HCT116 (cell line): ENCODE measurements at regions of chr4 and their contacts with region 1.

Region 1: GRCh38 chr4:69896530-69897116 is 34.2 kb upstream of the CSN1S1 start:
- DNase-seq: peak; percentile 7
- ATAC-seq: peak; percentile 36; the same call in 1 of the 2 replicates
- H3K4me3 ChIP-seq: no peak overlapping the region
- H3K27ac ChIP-seq: no peak overlapping the region
- H3K4me1 ChIP-seq: no peaks in the 10 kb centered on the region
- H3K27me3 ChIP-seq: no peaks in the 10 kb centered on the region
- CTCF ChIP-seq: peak; percentile 47 to 54 (median 51); a peak in 5 of 6 replicates
- POLR2A ChIP-seq: no peak
- RAD21 ChIP-seq: peak; percentile 61

Region 2: DNA sequence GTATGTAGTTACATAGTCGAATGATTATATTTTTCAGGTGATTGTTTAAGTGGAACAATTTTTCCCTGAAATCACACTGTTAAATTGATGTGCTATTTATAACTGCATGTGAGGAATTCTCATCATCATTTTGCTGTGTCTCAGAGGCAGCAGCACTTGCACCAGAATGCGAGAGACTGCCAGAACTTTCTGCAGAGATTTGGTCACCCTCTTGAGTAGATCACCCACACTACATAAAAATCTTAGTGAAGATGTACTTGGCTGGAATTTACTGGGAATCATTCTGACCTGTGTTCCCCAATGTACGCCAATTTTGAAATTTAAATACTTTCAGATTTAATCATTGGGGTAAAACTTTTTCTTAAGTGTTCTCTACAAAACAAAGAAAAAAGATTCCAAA is 406.4 kb before region 1 on chr4:
- CTCF ChIA-PET with region 1: no interaction called
- POLR2A ChIA-PET with region 1: no interaction called
- RAD21 ChIA-PET with region 1: no interaction called
- intact Hi-C with region 1: no loop called
- DNase-seq: no peak
- ATAC-seq: no peak
- H3K4me3 ChIP-seq: no peak overlapping the region
- H3K27ac ChIP-seq: no peak overlapping the region
- H3K4me1 ChIP-seq: no peaks in the 10 kb centered on the region
- H3K27me3 ChIP-seq: no peaks in the 10 kb centered on the region
- CTCF ChIP-seq: no peak
- POLR2A ChIP-seq: no peak
- RAD21 ChIP-seq: no peak

Region 3: DNA sequence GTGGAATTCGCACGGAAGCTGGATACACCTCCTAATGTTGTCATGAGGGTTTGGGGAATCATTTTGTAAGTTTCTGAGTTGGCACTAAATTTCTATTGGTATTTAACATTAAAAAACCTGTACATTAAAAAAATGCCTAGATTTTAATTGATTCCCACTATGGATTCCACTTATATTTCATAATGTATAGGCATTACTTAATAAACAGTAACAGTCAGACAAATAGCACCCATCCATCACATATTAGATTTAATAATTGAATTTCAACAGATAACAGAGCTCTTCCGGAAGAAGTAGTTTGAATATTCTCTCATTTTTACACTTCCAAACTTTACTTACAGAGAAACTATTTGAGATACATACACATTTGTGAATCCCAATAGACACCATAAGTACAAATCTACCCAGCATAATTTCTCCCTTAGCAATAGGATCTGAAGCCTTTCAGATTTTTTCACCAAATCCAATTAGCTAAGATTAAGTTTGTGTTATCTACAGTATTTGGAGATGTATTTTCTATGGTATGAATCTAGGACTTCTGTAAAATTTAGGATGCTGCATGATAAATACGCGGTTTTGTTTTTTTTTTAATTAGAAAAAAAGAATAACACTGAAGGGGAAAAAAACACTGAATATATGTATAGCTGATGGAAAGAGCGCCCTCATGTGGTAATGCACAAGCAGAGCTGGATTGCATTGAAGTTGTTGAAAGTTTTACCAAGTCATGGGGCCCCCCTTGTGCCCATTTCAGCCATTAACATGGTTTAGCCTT is 286.7 kb after region 1 on chr4:
- CTCF ChIA-PET with region 1: interaction called, 9 read pairs
- POLR2A ChIA-PET with region 1: no interaction called
- RAD21 ChIA-PET with region 1: interaction called in 1 of 2 experiments, 4 read pairs
- intact Hi-C with region 1: loop called (anchors 1 kb)
- DNase-seq: peak; percentile 65
- ATAC-seq: peak; percentile 93
- H3K4me3 ChIP-seq: no peak overlapping the region
- H3K27ac ChIP-seq: no peak overlapping the region
- H3K4me1 ChIP-seq: no peaks in the 10 kb centered on the region
- H3K27me3 ChIP-seq: no peaks in the 10 kb centered on the region
- CTCF ChIP-seq: peak; percentile 78 to 88 (median 87)
- POLR2A ChIP-seq: no peak
- RAD21 ChIP-seq: peak; percentile 76

Region 4: GRCh38 chr4:70269674-70270073 is 373.1 kb after region 1 on chr4:
- CTCF ChIA-PET with region 1: interaction called, 9 read pairs
- POLR2A ChIA-PET with region 1: no interaction called
- RAD21 ChIA-PET with region 1: no interaction called
- intact Hi-C with region 1: loop called (anchors 5 kb)
- DNase-seq: peak; percentile 23
- ATAC-seq: no peak; the same call in 1 of the 2 replicates
- H3K4me3 ChIP-seq: no peak overlapping the region
- H3K27ac ChIP-seq: no peak overlapping the region
- H3K4me1 ChIP-seq: no peaks in the 10 kb centered on the region
- H3K27me3 ChIP-seq: no peaks in the 10 kb centered on the region
- CTCF ChIP-seq: peak; percentile 12 to 45 (median 27); a peak in 3 of 6 replicates
- POLR2A ChIP-seq: no peak
- RAD21 ChIP-seq: peak; percentile 60

Region 5: DNA sequence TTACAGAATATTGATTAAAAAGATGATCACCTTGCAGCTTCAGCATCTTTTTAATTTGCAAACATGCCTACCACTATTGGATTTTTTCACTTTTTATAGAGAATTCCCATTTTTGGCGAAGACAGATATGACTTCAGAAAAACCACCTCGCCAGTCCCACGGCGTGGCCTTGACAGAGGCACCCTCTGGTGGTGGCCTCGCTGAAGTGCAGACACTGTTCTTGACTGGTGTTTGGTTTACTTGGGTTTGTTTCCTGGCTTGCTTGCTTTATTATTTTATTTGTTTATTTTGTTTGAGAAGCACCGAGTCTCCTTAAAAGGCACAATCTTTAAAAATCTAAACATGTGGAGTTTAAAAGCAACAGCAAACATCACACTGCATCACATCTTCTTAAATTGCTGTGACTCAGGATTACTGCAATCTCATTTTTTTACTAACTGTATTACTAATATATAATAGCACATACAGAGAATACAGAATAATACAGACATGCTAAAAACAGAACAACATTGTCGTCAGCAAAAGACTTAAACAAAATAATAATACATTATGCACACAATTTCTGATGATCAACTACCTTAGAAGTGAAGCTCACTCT is 608.6 kb after region 1 on chr4:
- CTCF ChIA-PET with region 1: no interaction called
- POLR2A ChIA-PET with region 1: no interaction called
- RAD21 ChIA-PET with region 1: no interaction called
- intact Hi-C with region 1: loop called (anchors 2 kb)
- DNase-seq: peak; percentile 42
- ATAC-seq: peak; percentile 93
- H3K4me3 ChIP-seq: no peak overlapping the region
- H3K27ac ChIP-seq: no peak overlapping the region
- H3K4me1 ChIP-seq: no peaks in the 10 kb centered on the region
- H3K27me3 ChIP-seq: no peaks in the 10 kb centered on the region
- CTCF ChIP-seq: peak; percentile 63 to 97 (median 97)
- POLR2A ChIP-seq: no peak
- RAD21 ChIP-seq: peak; percentile 87